ENCODE measurements at regions of chr14 and their contacts with region 1.

Region 1: DNA sequence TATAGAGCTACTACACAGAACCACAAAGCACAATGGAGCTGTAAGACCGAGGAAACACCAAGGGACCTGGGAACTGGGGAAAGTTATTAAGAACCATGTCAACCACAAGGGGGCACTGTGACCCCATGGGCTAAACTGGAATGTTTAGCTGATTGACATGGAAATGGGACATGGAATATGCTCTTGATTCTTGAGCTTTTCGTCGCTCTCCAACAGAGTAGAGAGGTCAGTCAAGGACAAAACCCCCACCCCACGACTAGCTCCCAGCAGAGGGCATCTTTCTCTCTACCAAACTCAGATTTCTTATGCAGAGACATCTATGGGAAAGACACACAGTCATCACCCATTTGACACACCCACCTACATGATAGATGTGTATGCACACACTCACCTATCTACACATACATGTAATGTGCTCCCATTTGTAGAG is 10.1 kb downstream of the NDRG2 start:
- DNase-seq: peak; percentile 87
- ATAC-seq: peak; percentile 87
- H3K4me3 Mint-ChIP-seq: no peak overlapping the region
- H3K27ac Mint-ChIP-seq: no peak overlapping the region
- H3K4me1 Mint-ChIP-seq: no peaks in the 10 kb centered on the region
- H3K27me3 Mint-ChIP-seq: peaks cover 15% of the 10 kb centered on the region

Region 2: DNA sequence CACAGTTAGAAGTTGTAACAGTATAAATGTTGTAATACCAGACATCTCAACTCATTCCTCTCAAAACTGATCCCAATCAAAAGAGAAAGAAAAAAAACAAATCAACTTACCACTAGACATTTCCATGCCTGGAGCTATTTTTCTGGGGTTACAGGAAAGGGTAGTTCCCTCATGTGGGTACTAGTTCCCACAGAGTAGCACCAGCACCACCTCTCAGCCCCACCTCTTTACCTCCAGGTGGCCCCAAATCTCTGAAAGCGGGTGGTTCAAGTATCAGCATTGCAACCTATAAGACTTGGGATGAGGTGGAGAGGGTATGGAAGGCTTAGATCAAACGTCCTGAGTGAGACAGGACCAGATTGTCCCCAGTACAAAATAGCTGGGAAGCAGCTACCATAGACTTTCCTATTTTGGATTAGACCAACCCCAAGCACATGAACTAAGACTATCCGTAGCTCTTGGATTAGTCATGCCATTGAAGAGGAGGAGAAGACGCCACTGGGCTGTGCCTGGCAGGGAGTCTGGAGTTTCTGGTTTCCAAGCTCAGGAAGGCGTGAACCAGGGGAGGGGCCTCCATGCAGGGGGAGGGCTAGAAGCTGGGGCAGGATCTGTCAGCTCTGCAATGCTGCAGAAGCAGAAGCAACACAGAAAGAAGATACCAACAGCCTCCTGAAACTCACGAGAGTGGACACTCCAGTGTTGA is 16.0 kb before region 1 on chr14 and contains the start of gene SLC39A2:
- CTCF ChIA-PET with region 1: interaction called, 68 read pairs
- POLR2A ChIA-PET with region 1: no interaction called
- intact Hi-C with region 1: no loop called
- DNase-seq: no peak
- ATAC-seq: peak; percentile 36
- H3K4me3 Mint-ChIP-seq: no peak within 1 kb of the TSS
- H3K27ac Mint-ChIP-seq: no peak within 1 kb of the TSS
- H3K4me1 Mint-ChIP-seq: peaks cover 23% of the 10 kb centered on the region
- H3K27me3 Mint-ChIP-seq: no peaks in the 10 kb centered on the region
- total RNA-seq, gene SLC39A2: 0.21 to 0.30 TPM

Region 3: GRCh38 chr14:21024585-21025370 is 10.0 kb after region 1 on chr14 and contains the start of gene NDRG2:
- CTCF ChIA-PET with region 1: interaction called, 34 read pairs
- POLR2A ChIA-PET with region 1: no interaction called
- intact Hi-C with region 1: no loop called
- DNase-seq: peak; percentile 80
- ATAC-seq: peak; percentile 74
- H3K4me3 Mint-ChIP-seq: peak within 1 kb of the TSS; percentile 73
- H3K27ac Mint-ChIP-seq: peak within 1 kb of the TSS; percentile 55
- H3K4me1 Mint-ChIP-seq: peaks cover 16% of the 10 kb centered on the region
- H3K27me3 Mint-ChIP-seq: peaks cover 2% of the 10 kb centered on the region
- total RNA-seq, gene NDRG2: 5.5 to 7.0 TPM

Region 4: DNA sequence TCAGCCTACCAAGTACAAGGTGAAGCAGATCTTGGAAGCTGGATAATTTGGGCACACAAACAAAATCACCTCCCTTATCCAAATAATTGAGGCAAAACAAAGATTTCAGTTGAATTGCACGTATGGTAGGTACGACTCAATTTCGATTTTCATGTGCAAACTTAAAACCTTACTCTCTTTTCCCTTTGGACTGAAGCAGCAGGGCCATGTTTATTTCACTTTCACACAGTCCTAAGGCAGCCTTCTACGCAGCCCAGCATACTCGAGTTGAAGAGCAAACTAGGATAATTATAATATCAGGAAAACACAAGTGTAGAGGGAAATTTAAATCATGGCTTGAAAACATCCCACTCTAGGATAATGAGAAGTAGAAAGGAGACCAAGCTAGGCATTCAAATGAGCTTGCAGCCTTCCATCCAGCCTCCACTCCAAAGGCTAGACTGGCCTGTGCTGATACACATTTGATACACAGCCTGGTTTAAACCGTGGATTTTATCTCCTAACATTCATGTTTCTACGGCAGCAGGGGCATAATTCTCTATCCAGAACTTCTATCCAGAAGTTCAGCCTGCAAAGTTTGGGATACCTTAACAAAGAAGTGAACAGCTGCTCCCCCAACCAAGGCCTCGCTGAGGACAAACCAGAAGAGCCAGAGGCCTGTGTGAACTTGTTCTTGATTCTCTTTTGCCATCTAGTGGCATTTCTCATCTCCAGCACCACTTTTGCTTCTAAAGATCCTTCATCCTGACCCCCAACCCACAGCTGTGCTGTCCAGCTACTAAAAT is 25.0 kb after region 1 on chr14:
- CTCF ChIA-PET with region 1: interaction called, 84 read pairs
- POLR2A ChIA-PET with region 1: interaction called, 7 read pairs
- intact Hi-C with region 1: loop called (anchors 1 kb)
- DNase-seq: peak; percentile 29
- ATAC-seq: peak; percentile 75
- H3K4me3 Mint-ChIP-seq: no peak overlapping the region
- H3K27ac Mint-ChIP-seq: no peak overlapping the region
- H3K4me1 Mint-ChIP-seq: peaks cover 6% of the 10 kb centered on the region
- H3K27me3 Mint-ChIP-seq: peaks cover 5% of the 10 kb centered on the region

Region 5: DNA sequence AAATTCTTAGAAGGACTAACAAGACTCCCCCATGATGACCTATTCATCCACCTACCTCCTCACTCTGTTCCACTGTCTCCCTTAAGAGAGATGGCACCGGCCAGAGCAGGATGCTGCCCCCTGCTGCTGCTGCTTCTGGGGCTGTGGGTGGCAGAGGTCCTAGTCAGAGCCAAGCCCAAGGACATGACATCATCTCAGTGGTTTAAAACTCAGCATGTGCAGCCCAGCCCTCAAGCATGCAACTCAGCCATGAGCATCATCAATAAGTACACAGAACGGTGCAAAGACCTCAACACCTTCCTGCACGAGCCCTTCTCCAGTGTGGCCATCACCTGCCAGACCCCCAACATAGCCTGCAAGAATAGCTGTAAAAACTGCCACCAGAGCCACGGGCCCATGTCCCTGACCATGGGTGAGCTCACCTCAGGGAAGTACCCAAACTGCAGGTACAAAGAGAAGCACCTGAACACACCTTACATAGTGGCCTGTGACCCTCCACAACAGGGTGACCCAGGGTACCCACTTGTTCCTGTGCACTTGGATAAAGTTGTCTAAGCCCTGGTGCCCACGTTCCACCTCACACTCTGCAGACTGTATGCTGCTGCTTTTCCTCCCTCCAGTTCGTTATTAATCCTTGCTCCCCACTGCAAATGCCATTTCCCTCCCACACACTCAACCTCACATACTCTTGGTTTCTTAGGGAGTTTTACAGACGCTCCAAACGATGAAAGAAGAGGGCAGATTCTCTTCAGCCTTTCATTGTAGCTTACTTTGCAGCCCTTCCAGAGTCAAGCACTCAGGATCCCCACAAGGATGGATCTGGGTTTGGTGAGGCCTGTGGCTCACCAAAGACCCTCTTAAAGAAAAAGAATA is 43.3 kb after region 1 on chr14 and contains the start of gene RNASE8:
- CTCF ChIA-PET with region 1: interaction called, 11 read pairs
- POLR2A ChIA-PET with region 1: no interaction called
- intact Hi-C with region 1: no loop called
- DNase-seq: peak; percentile 26
- ATAC-seq: peak; percentile 60
- H3K4me3 Mint-ChIP-seq: no peak within 1 kb of the TSS
- H3K27ac Mint-ChIP-seq: no peak within 1 kb of the TSS
- H3K4me1 Mint-ChIP-seq: peaks cover 2% of the 10 kb centered on the region
- H3K27me3 Mint-ChIP-seq: peaks cover 15% of the 10 kb centered on the region
- total RNA-seq, gene RNASE8: not detected

Region 6: GRCh38 chr14:21092273-21093011 is 77.7 kb after region 1 on chr14:
- CTCF ChIA-PET with region 1: interaction called, 183 read pairs
- POLR2A ChIA-PET with region 1: no interaction called
- intact Hi-C with region 1: loop called (anchors 1 kb)
- DNase-seq: peak; percentile 95
- ATAC-seq: peak; percentile 91
- H3K4me3 Mint-ChIP-seq: no peak overlapping the region
- H3K27ac Mint-ChIP-seq: no peak overlapping the region
- H3K4me1 Mint-ChIP-seq: peaks cover 17% of the 10 kb centered on the region
- H3K27me3 Mint-ChIP-seq: no peaks in the 10 kb centered on the region

Region 7: GRCh38 chr14:21557084-21557901 is 542.5 kb after region 1 on chr14:
- CTCF ChIA-PET with region 1: no interaction called
- POLR2A ChIA-PET with region 1: no interaction called
- intact Hi-C with region 1: loop called in 1 of 2 experiments (anchors 10 kb)
- DNase-seq: peak; percentile 87
- ATAC-seq: peak; percentile 68
- H3K4me3 Mint-ChIP-seq: no peak overlapping the region
- H3K27ac Mint-ChIP-seq: no peak overlapping the region
- H3K4me1 Mint-ChIP-seq: peaks cover 4% of the 10 kb centered on the region
- H3K27me3 Mint-ChIP-seq: no peaks in the 10 kb centered on the region

Measured in activated CD4-positive, alpha-beta T cell treated with anti-CD3 and anti-CD28 coated beads for 36 hours (primary cell).